ENCODE measurements at regions of chr4 and their contacts with region 1.

Region 1: DNA sequence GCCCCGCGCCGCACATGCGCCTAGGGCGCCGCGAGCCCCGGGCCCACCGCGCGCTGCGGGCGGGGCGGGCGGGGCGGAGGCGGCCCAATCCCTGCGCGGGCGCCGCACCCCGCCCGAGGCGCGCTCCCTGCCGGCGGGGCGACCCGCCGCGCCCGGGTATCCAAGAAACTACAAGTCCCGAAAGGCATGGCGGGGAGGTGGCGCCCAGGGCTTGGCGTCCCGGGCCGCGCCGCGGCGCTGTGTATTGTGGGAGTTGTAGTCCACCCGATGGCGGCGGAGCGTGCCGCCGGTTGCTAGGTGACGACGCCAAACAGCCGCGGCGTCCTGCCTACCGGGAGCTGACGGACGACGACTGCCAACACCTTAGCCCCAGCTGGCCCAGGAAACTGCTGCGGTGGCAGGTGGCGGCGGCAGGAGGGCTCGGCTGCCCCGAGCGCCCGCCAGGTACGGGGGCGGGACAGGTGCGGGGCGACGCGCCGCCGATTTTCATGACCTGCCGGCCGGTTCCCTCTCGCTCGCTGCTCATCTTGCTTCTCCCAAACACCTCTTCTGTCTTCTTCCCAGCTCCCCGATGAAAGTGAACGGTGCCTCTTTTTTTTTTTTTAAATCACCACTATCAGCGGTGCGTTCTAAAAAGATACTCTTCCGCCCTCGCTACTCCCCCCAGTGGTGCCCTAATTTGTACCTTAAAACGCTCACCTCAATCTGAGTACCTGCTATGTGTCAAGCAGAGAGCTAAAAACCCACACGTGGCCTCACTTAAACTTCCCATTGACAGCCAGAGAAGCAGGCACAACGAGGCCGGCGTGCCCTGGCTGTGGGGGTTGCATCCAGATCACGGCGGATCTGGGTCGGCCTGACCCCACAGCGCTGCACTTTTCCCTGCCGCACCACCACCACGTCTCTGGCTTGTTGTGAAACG is at the start of gene CFAP99:
- DNase-seq: peak; percentile 80
- H3K4me3 ChIP-seq: peak within 1 kb of the TSS; percentile 46 to 90 (median 67)
- H3K27ac ChIP-seq: peak within 1 kb of the TSS; percentile 55 to 76 (median 69)
- H3K4me1 ChIP-seq: peaks cover 23 to 47% (median 26%) of the 10 kb centered on the region in 3 donors
- H3K27me3 ChIP-seq: peaks cover 0 to 79% (median 0%) of the 10 kb centered on the region in 4 donors
- CTCF ChIP-seq: peak in 3 of 6 experiments; percentile 3 to 29 (median 5)
- POLR2A ChIP-seq: no peak
- total RNA-seq, gene CFAP99: 0.11 TPM in 1 of 4 donors, not detected in the others

Region 2: GRCh38 chr4:2255501-2256155 is 163.3 kb before region 1 on chr4:
- intact Hi-C with region 1: loop called (anchors 10 kb)
- DNase-seq: no peak
- H3K4me3 ChIP-seq: peak overlapping the region in 1 of 4 donors; percentile 34
- H3K27ac ChIP-seq: peak overlapping the region; percentile 74 to 98 (median 92)
- H3K4me1 ChIP-seq: peaks cover 53 to 77% (median 53%) of the 10 kb centered on the region in 3 donors
- H3K27me3 ChIP-seq: no peaks in the 10 kb centered on the region
- CTCF ChIP-seq: no peak
- POLR2A ChIP-seq: no peak

Region 3: DNA sequence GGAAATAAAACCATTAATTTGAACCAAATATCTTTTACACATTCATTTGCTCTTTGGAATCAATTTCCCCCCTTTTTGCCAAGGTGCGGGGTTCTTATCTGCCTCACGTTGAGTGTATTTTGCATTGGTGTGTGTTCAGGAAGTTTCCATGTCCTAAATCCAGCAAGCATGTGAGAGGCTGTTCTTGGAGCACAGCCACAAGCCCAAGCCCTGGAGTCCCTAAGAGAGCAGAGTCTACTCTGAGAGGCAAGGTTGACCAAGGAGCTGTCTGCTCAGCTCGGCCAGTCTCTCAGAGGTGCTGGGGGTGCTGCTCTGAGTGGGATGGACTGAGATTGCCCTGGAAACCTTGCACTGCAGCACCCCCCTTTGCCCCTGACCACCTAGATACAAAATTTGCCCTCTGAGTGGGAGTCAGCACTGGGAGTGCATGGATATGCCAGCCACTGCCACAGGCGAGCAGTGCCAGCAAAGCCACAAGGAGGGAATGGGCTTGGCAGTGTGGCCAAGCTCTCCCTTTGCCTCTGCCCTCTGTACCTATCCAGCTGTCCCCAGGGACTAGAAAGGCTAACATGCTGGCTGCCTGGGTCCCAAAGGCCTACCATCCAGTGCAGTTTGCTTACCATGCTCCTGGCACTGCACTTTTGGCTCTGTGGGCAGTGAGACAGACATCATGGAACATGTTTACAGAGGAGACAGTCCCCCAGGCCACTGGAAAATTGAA is 97.1 kb after region 1 on chr4:
- intact Hi-C with region 1: no loop called
- DNase-seq: no peak
- H3K4me3 ChIP-seq: no peak overlapping the region
- H3K27ac ChIP-seq: peak overlapping the region in 1 of 4 donors; percentile 21
- H3K4me1 ChIP-seq: peaks cover 0 to 8% (median 0%) of the 10 kb centered on the region in 3 donors
- H3K27me3 ChIP-seq: no peaks in the 10 kb centered on the region
- CTCF ChIP-seq: no peak
- POLR2A ChIP-seq: no peak

Region 4: DNA sequence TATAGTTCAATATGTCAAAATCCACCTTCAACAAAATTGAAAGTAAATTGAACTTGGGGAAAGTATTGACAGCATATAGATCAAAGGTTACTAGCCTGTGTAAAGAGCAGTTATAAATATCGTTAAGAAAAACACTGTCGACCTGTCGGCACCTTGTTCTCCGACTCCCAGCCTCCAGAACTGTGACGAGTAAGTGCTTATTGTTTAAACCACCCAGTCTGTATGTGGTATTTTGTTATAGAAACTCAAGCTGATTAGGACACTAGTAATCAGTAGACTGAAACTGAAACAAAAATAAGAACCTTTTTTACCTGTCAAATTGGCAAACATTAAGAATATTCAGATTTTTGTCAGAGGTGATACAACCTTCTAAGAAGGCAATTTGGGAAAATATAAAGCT is 672.6 kb after region 1 on chr4:
- intact Hi-C with region 1: no loop called
- DNase-seq: no peak
- H3K4me3 ChIP-seq: no peak overlapping the region
- H3K27ac ChIP-seq: no peak overlapping the region
- H3K4me1 ChIP-seq: no peaks in the 10 kb centered on the region
- H3K27me3 ChIP-seq: no peaks in the 10 kb centered on the region
- CTCF ChIP-seq: no peak
- POLR2A ChIP-seq: no peak

Measured in esophagus squamous epithelium (tissue), 5 donors.